ENCODE measurements at regions of chr9 and their contacts with region 1.

Region 1: GRCh38 chr9:30065883-30066282 is 2318.6 kb upstream of the ACO1 start:
- DNase-seq: no peak
- ATAC-seq: no peak
- H3K4me3 ChIP-seq: no peak overlapping the region
- H3K27ac ChIP-seq: no peak overlapping the region
- H3K4me1 ChIP-seq: no peaks in the 10 kb centered on the region
- H3K27me3 ChIP-seq: no peaks in the 10 kb centered on the region
- CTCF ChIP-seq: no peak
- POLR2A ChIP-seq: no peak

Region 2: GRCh38 chr9:30172206-30172605 is 106.3 kb after region 1 on chr9:
- in situ Hi-C with region 1: loop called in 1 of 4 experiments (anchors 25 kb)
- intact Hi-C with region 1: no loop called
- DNase-seq: no peak
- ATAC-seq: no peak
- H3K4me3 ChIP-seq: no peak overlapping the region
- H3K27ac ChIP-seq: no peak overlapping the region
- H3K4me1 ChIP-seq: no peaks in the 10 kb centered on the region
- H3K27me3 ChIP-seq: no peaks in the 10 kb centered on the region
- CTCF ChIP-seq: no peak
- POLR2A ChIP-seq: no peak

Measured in gastrocnemius medialis (tissue), 4 donors.